ENCODE measurements at regions of chr7 and their contacts with region 1.

Region 1: GRCh38 chr7:19442016-19442785 is 266.6 kb downstream of the POLR1F start:
- DNase-seq: no peak
- H3K4me3 ChIP-seq: no peak overlapping the region
- H3K27me3 ChIP-seq: no peaks in the 10 kb centered on the region; the same call in 1 of the 2 replicates
- CTCF ChIP-seq: peak; percentile 77

Region 2: GRCh38 chr7:18866359-18867036 is 575.7 kb before region 1 on chr7:
- CTCF ChIA-PET with region 1: no interaction called
- POLR2A ChIA-PET with region 1: no interaction called
- DNase-seq: peak; percentile 99
- H3K4me3 ChIP-seq: no peak overlapping the region
- H3K27me3 ChIP-seq: no peaks in the 10 kb centered on the region
- CTCF ChIP-seq: no peak

Region 3: GRCh38 chr7:19116150-19117090 is 325.8 kb before region 1 on chr7:
- CTCF ChIA-PET with region 1: interaction called, 16 read pairs
- POLR2A ChIA-PET with region 1: no interaction called
- DNase-seq: no peak
- H3K4me3 ChIP-seq: peak overlapping the region; percentile 87
- H3K27me3 ChIP-seq: no peaks in the 10 kb centered on the region
- CTCF ChIP-seq: no peak

Region 4: DNA sequence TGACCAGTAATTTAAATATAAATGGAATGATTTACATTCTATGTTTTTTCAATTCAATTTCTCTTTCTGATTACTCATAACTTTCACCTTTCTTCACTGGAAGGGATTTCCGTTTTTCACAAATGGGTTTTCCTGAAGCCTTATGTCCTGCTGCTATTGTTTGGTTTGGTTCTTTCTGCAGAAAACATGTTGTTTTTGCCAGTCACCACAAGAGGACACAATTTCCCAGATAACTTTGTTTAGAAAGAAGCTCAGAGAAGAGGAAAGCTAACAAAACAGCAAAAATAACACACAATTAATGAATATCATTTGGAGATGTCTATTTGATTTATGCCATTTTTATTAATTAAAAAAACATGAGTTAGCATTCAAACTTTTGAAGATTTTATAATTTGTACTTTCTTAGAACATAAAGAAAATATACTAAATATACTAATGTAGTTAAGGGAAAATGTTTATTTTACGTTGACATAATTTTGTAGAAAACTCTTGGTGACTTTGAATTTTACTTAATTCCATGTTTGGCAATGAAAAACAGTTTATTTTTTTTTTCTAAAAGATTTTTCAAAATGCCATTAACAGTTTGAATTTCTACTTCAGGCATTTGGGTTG is 320.1 kb before region 1 on chr7:
- CTCF ChIA-PET with region 1: interaction called, 16 read pairs
- POLR2A ChIA-PET with region 1: no interaction called
- DNase-seq: no peak
- H3K4me3 ChIP-seq: no peak overlapping the region
- H3K27me3 ChIP-seq: no peaks in the 10 kb centered on the region
- CTCF ChIP-seq: peak; percentile 88

Region 5: GRCh38 chr7:19537942-19538401 is 95.8 kb after region 1 on chr7:
- CTCF ChIA-PET with region 1: no interaction called
- POLR2A ChIA-PET with region 1: no interaction called
- DNase-seq: no peak
- H3K4me3 ChIP-seq: no peak overlapping the region
- H3K27me3 ChIP-seq: no peaks in the 10 kb centered on the region
- CTCF ChIP-seq: no peak

Measured in BJ (cell line).